MCF 10A (cell line): ENCODE measurements at regions of chr5 and their contacts with region 1.

Region 1: DNA sequence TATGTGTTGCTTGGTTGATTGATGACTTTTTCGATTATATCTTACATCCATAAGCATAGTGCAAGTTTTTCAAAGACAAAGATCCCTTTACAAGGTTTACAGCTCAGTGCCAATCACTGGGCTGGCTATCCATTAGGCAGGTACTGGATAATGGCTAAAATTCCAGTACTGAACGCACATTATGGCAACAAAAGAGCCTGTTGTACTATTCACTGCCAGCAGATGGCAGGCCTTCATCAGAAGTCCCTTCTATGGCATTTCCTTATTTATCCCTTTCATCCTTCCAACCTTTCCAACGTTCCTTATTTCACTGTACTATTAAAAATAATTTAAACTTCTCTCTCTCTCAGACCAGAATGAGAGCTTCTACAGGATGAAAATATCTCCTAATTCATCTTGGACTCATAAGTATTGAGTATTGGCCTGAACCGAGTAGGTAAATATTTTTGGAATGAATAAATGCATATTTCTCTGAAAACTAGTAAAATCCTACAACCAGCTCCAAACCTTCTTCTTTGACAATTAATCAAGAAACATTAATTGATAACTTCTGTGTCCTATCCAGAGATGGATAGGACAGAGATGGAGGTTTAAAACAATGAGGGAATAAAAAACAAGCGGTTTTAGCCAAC is 6.7 kb upstream of the WNT8A start:
- DNase-seq: peak; percentile 82
- H3K4me3 Mint-ChIP-seq: no peak overlapping the region
- H3K27ac Mint-ChIP-seq: no peak overlapping the region
- H3K4me1 Mint-ChIP-seq: no peaks in the 10 kb centered on the region
- H3K27me3 Mint-ChIP-seq: no peaks in the 10 kb centered on the region
- CTCF ChIP-seq: peak; percentile 95

Region 2: DNA sequence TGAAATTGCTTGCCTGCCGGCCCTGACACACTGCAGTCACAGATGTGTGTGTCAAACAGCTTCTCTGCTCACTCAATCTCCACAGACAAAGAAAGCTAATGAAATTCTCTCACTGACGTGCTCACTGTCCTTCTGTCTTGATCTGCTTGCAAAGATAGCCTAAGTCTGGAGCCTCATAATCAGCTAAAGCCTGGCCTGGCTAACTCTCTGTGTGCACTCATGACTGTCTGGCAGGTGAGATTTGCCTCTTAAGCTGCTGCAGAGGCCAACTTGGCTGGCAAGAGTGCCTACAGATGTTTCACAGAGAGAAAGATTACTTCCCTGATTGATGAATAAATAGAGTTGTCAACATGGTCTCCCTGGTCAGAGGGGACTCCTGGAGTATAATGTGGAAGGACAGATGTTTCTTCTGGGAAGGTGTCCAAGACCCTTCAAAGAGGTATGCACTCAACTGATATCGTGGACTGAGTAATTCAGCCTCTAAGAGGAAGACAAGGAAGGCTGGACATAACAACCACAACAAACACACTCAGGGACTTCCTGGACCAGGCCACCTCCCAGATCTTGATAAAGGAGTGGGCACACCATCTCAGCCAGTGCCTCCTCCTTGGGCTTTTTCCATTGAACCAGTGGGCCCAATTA is 940.1 kb before region 1 on chr5:
- CTCF ChIA-PET with region 1: no interaction called
- POLR2A ChIA-PET with region 1: no interaction called
- intact Hi-C with region 1: no loop called
- DNase-seq: no peak
- H3K4me3 Mint-ChIP-seq: no peak overlapping the region
- H3K27ac Mint-ChIP-seq: no peak overlapping the region
- H3K4me1 Mint-ChIP-seq: peaks cover 11% of the 10 kb centered on the region
- H3K27me3 Mint-ChIP-seq: no peaks in the 10 kb centered on the region
- CTCF ChIP-seq: no peak

Region 3: DNA sequence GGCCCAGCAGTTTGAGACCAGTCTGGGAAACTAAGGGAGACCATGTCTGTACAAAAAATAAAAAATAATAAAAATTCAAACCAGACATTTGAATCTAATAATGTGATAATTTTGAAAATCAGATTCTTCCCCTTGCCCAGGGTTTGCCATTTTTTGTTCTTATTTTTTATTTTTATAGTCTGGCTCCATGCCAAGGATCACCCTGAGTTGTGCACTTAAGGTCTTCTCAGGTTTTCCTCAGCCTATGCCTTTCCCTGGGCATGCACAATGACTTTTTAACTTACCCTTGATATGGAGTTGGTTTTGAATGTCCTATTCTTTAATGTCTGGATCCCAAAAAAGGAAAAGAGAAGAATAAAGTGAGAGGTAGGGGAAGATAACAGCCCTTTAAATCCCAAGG is 159.2 kb before region 1 on chr5:
- CTCF ChIA-PET with region 1: no interaction called
- POLR2A ChIA-PET with region 1: no interaction called
- intact Hi-C with region 1: no loop called
- DNase-seq: no peak
- H3K4me3 Mint-ChIP-seq: no peak overlapping the region
- H3K27ac Mint-ChIP-seq: no peak overlapping the region
- H3K4me1 Mint-ChIP-seq: no peaks in the 10 kb centered on the region
- H3K27me3 Mint-ChIP-seq: no peaks in the 10 kb centered on the region
- CTCF ChIP-seq: no peak

Region 4: DNA sequence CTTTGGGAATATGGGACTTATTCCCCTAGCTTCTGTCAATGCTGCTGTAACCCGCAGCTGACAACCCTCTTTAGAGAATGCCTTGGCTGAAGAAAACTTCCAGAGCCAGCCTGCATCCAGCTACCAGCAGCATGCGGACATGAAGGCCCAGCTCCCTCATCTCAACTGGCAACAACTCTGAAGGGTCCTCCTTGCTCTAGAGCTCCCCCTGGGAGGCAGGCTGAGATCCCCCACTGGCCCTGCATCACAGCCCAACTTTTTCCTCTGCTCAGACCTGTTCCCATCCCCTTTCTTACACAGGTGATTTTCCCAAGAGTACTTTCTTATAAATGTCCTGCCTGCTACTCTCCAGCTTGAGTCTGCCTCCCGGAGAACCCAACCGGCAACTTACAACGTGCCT is 12.1 kb before region 1 on chr5:
- CTCF ChIA-PET with region 1: interaction called, 67 read pairs
- POLR2A ChIA-PET with region 1: interaction called, 3 read pairs
- intact Hi-C with region 1: no loop called
- DNase-seq: no peak
- H3K4me3 Mint-ChIP-seq: no peak overlapping the region
- H3K27ac Mint-ChIP-seq: no peak overlapping the region
- H3K4me1 Mint-ChIP-seq: peaks cover 7% of the 10 kb centered on the region
- H3K27me3 Mint-ChIP-seq: no peaks in the 10 kb centered on the region
- CTCF ChIP-seq: peak; percentile 18

Region 5: DNA sequence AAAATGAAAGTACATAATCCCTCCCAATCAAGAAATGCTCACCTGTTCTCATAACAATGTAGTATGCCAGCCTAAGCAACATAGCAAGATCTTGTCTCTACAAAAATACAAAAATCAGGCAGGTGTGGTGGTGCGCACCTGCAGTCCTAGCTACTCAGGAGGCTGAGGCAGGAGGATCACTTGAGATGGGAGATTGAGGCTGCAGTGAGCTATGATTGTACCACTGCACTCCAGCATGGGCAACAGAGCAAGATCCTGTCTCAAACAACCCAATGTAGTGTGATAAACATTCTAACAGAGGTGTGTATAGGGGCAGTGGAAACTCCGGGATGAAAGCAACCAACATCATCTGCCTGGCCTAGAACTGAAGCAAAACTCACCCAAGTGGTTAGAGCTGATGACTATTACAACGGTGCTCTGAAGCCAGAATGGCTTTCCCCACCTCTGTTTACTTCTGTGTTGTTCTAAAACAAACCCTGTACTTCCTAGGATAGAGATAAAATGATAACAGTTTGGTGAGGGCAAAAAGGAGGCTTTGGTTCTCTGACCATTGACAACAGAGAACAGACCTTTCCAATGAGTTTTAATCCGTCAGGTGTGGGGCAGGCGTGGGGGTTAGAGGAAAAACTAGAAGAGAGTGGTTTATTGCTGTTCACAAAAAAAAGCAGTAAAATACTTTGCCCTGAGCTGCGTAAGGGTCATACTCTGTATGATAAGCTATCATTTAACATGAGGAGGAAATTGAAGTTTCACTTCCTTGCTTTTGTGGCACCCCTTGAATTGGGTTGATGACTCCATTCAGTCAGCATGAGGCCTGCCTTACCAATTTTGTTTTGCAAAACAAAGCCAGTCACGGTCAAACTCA is 25.5 kb after region 1 on chr5:
- CTCF ChIA-PET with region 1: interaction called, 21 read pairs
- POLR2A ChIA-PET with region 1: no interaction called
- intact Hi-C with region 1: no loop called
- DNase-seq: no peak
- H3K4me3 Mint-ChIP-seq: no peak overlapping the region
- H3K27ac Mint-ChIP-seq: no peak overlapping the region
- H3K4me1 Mint-ChIP-seq: no peaks in the 10 kb centered on the region
- H3K27me3 Mint-ChIP-seq: peaks cover 41% of the 10 kb centered on the region
- CTCF ChIP-seq: no peak

Region 6: GRCh38 chr5:138128334-138128733 is 51.2 kb after region 1 on chr5:
- CTCF ChIA-PET with region 1: interaction called, 199 read pairs
- POLR2A ChIA-PET with region 1: interaction called, 3 read pairs
- intact Hi-C with region 1: loop called (anchors 1 kb)
- DNase-seq: no peak
- H3K4me3 Mint-ChIP-seq: no peak overlapping the region
- H3K27ac Mint-ChIP-seq: no peak overlapping the region
- H3K4me1 Mint-ChIP-seq: peaks cover under 1% of the 10 kb centered on the region
- H3K27me3 Mint-ChIP-seq: peaks cover 24% of the 10 kb centered on the region
- CTCF ChIP-seq: no peak

Region 7: DNA sequence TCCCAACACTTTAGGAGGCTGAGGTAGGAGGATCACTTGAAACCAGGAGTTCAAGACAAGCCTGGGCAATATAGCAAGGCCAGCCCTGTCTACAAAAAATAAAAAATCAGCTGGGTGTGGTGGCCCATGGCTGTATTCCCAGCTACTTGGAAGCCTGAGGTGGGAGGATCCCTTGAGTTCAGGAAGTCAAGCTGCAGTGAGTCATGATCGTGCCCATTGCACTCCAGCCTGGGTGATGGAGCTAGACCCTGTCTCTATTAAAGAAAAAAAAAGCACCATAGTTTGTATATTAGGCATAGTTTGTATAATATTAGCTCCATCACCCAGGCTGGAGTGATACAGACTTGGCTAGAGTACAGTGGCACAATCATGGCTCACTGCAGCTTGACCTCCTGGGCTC is 71.6 kb after region 1 on chr5:
- CTCF ChIA-PET with region 1: interaction called, 46 read pairs
- POLR2A ChIA-PET with region 1: no interaction called
- intact Hi-C with region 1: no loop called
- DNase-seq: peak; percentile 94
- H3K4me3 Mint-ChIP-seq: no peak overlapping the region
- H3K27ac Mint-ChIP-seq: no peak overlapping the region
- H3K4me1 Mint-ChIP-seq: no peaks in the 10 kb centered on the region
- H3K27me3 Mint-ChIP-seq: no peaks in the 10 kb centered on the region
- CTCF ChIP-seq: no peak